ENCODE measurements at regions of chr13 and their contacts with region 1.

Region 1: GRCh38 chr13:27130979-27131623 is 40.5 kb downstream of the USP12 start:
- DNase-seq: peak; percentile 28
- ATAC-seq: peak; percentile 88
- H3K4me3 Mint-ChIP-seq: peak overlapping the region; percentile 2
- H3K27ac Mint-ChIP-seq: peak overlapping the region; percentile 88
- H3K4me1 Mint-ChIP-seq: peaks cover 91% of the 10 kb centered on the region
- H3K27me3 Mint-ChIP-seq: no peaks in the 10 kb centered on the region
- CTCF ChIP-seq: no peak

Region 2: DNA sequence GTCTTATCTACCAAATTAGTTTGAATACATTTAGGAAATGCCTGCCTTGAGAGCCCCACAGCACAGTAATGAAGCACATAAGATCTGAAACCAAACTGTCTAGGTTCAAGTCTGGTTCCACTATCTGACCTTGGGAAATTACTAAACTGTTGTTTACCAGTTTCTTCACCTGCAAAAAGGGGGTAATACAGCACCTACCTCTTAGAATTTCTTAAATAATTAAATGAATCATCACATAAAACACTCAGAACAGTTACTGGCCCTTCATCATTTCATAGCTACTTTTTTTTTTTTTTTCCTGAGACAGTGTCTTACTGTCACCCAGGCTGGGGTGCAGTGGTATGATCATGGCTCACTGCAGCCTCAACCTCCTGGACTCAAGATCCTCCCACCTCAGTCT is 19.1 kb before region 1 on chr13:
- CTCF ChIA-PET with region 1: no interaction called
- POLR2A ChIA-PET with region 1: interaction called, 15 read pairs
- intact Hi-C with region 1: loop called (anchors 2 kb)
- DNase-seq: no peak
- ATAC-seq: no peak
- H3K4me3 Mint-ChIP-seq: no peak overlapping the region
- H3K27ac Mint-ChIP-seq: no peak overlapping the region
- H3K4me1 Mint-ChIP-seq: peaks cover 55% of the 10 kb centered on the region
- H3K27me3 Mint-ChIP-seq: no peaks in the 10 kb centered on the region
- CTCF ChIP-seq: no peak

Region 3: GRCh38 chr13:27117952-27118351 is 13.1 kb before region 1 on chr13:
- CTCF ChIA-PET with region 1: no interaction called
- POLR2A ChIA-PET with region 1: interaction called, 15 read pairs
- intact Hi-C with region 1: loop called (anchors 1 kb)
- DNase-seq: no peak
- ATAC-seq: no peak
- H3K4me3 Mint-ChIP-seq: no peak overlapping the region
- H3K27ac Mint-ChIP-seq: no peak overlapping the region
- H3K4me1 Mint-ChIP-seq: peaks cover 77% of the 10 kb centered on the region
- H3K27me3 Mint-ChIP-seq: no peaks in the 10 kb centered on the region
- CTCF ChIP-seq: no peak

Region 4: GRCh38 chr13:27147530-27148170 is 16.5 kb after region 1 on chr13:
- CTCF ChIA-PET with region 1: interaction called, 6 read pairs
- POLR2A ChIA-PET with region 1: interaction called, 55 read pairs
- intact Hi-C with region 1: loop called (anchors 1 kb)
- DNase-seq: peak; percentile 48
- ATAC-seq: peak; percentile 90
- H3K4me3 Mint-ChIP-seq: peak overlapping the region; percentile 81
- H3K27ac Mint-ChIP-seq: peak overlapping the region; percentile 99
- H3K4me1 Mint-ChIP-seq: peaks cover 92% of the 10 kb centered on the region
- H3K27me3 Mint-ChIP-seq: no peaks in the 10 kb centered on the region
- CTCF ChIP-seq: no peak

Region 5: DNA sequence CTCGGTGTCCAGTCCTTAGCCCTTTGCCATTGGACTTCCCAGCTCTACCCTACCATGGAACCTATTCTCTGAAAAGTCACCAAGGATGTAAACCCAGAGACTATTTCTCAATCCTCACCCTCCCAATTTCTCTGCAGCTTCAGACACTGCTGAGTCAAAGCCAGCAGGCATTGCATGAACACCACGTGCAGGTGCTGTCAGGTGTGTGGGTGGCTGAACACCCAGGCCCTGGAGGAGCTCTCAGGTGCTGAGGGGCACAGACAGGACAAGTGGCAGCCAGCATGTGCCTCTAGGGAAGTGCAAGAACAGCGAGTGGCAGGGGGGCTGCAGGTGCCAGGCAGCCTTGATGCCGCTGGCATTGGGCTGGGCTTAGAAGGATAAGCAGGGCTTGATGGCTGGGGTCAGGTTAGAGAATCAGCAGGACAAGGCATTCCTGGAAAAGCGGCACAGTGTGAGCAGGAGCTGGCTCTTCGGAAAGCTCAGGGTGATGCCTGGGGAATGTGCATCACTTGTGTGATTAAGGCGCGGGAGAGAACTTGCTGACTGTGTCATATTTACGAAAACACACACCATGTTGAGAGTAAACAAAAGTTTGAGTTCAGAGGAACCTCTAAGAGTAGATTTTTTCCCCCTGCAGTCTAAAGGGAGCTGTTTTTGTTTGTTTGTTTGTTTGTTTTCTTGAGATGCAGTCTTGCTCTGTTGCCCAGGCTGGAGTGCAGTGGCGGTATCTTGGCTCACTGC is 405.4 kb after region 1 on chr13:
- CTCF ChIA-PET with region 1: no interaction called
- POLR2A ChIA-PET with region 1: no interaction called
- intact Hi-C with region 1: no loop called
- DNase-seq: no peak
- ATAC-seq: no peak
- H3K4me3 Mint-ChIP-seq: no peak overlapping the region
- H3K27ac Mint-ChIP-seq: no peak overlapping the region
- H3K4me1 Mint-ChIP-seq: peaks cover 11% of the 10 kb centered on the region
- H3K27me3 Mint-ChIP-seq: no peaks in the 10 kb centered on the region
- CTCF ChIP-seq: no peak